Cardiac septum (tissue), 1 donor: ENCODE measurements at regions of chr2 and their contacts with region 1.

Region 1: DNA sequence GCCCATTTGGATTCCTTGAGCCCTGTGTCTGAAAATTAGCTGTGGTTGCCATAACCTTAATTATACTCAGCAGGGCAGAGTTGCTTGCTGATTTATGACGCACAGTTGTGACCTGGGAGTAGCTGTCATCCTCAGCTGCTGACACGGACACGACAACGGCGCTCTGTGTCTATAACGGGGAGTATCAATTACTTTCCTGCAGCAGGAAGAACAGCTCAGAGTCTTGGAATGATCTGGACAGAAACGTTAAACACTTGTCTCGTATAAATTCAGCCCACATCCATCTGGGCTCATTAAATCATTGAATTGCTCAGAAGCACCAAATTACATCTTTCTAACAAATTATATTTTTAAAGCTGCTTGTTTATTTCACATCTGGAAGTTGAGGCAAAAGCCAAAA is 116.3 kb downstream of the SEPTIN10 start:
- DNase-seq: no peak

Region 2: GRCh38 chr2:109339519-109339966 is 157.9 kb before region 1 on chr2:
- intact Hi-C with region 1: no loop called
- DNase-seq: no peak

Region 3: GRCh38 chr2:109448946-109449788 is 48.3 kb before region 1 on chr2:
- intact Hi-C with region 1: loop called (anchors 2 kb)
- DNase-seq: no peak